MCF 10A (cell line): ENCODE measurements at regions of chr18 and their contacts with region 1.

Region 1: GRCh38 chr18:74342416-74343043 is 26.9 kb downstream of the C18orf63 start:
- DNase-seq: peak; percentile 60
- H3K4me3 Mint-ChIP-seq: no peak overlapping the region
- H3K27ac Mint-ChIP-seq: no peak overlapping the region
- H3K4me1 Mint-ChIP-seq: no peaks in the 10 kb centered on the region
- H3K27me3 Mint-ChIP-seq: peaks cover 41% of the 10 kb centered on the region
- CTCF ChIP-seq: peak; percentile 62

Region 2: GRCh38 chr18:72700961-72701718 is 1641.4 kb before region 1 on chr18:
- CTCF ChIA-PET with region 1: interaction called, 5 read pairs
- POLR2A ChIA-PET with region 1: no interaction called
- intact Hi-C with region 1: loop called (anchors 2 kb)
- DNase-seq: peak; percentile 40
- H3K4me3 Mint-ChIP-seq: no peak overlapping the region
- H3K27ac Mint-ChIP-seq: no peak overlapping the region
- H3K4me1 Mint-ChIP-seq: no peaks in the 10 kb centered on the region
- H3K27me3 Mint-ChIP-seq: no peaks in the 10 kb centered on the region
- CTCF ChIP-seq: peak; percentile 61

Region 3: GRCh38 chr18:74216631-74217110 is 125.9 kb before region 1 on chr18:
- CTCF ChIA-PET with region 1: interaction called, 11 read pairs
- POLR2A ChIA-PET with region 1: no interaction called
- intact Hi-C with region 1: no loop called
- DNase-seq: no peak
- H3K4me3 Mint-ChIP-seq: no peak overlapping the region
- H3K27ac Mint-ChIP-seq: no peak overlapping the region
- H3K4me1 Mint-ChIP-seq: peaks cover 5% of the 10 kb centered on the region
- H3K27me3 Mint-ChIP-seq: no peaks in the 10 kb centered on the region
- CTCF ChIP-seq: no peak

Region 4: DNA sequence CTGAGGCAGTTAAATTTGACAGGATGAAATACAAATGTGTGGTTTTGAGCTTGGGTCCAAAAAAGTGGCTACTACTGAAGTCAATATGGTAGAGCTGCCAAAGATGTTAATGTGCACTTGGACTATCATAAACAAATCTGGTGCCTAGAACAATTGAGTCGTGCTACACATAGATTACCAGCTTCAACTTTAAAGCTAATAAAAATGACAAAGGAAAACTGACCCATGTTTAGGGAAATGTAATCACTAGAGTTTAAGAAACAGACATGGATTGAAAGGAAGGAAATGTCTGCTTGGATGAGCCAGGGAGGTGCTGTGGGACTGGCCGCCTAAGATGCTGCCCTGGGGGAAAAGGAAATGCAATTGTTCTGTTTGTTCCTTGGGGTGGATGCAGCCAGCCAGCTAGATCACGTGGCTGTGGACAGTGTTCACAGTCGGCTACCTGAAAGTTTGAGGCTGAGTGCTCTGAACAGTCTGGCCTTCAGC is 87.4 kb before region 1 on chr18:
- CTCF ChIA-PET with region 1: no interaction called
- POLR2A ChIA-PET with region 1: no interaction called
- intact Hi-C with region 1: no loop called
- DNase-seq: peak; percentile 14
- H3K4me3 Mint-ChIP-seq: no peak overlapping the region
- H3K27ac Mint-ChIP-seq: no peak overlapping the region
- H3K4me1 Mint-ChIP-seq: peaks cover 15% of the 10 kb centered on the region
- H3K27me3 Mint-ChIP-seq: no peaks in the 10 kb centered on the region
- CTCF ChIP-seq: no peak

Region 5: DNA sequence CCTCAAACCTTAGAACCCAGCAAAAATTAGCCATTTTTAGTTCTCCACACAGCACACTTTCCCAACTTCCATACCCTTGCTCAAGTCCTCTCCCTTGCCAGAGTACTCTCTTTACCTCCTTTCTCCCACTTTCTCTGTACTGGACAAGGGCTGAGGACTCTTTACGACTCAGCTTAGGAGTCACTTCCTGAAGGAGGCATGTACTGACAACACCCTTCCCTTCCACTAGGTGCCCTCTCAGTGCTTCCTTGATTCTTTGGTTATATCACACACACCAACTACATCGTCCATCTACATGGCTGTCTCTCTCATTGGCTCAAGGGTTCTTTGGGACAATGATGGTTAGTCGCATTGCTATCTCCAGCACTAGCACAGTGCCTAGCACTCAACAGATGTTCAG is 32.1 kb before region 1 on chr18:
- CTCF ChIA-PET with region 1: interaction called, 20 read pairs
- POLR2A ChIA-PET with region 1: no interaction called
- intact Hi-C with region 1: loop called (anchors 2 kb)
- DNase-seq: peak; percentile 76
- H3K4me3 Mint-ChIP-seq: no peak overlapping the region
- H3K27ac Mint-ChIP-seq: peak overlapping the region; percentile 4
- H3K4me1 Mint-ChIP-seq: peaks cover 6% of the 10 kb centered on the region
- H3K27me3 Mint-ChIP-seq: no peaks in the 10 kb centered on the region
- CTCF ChIP-seq: peak; percentile 35

Region 6: DNA sequence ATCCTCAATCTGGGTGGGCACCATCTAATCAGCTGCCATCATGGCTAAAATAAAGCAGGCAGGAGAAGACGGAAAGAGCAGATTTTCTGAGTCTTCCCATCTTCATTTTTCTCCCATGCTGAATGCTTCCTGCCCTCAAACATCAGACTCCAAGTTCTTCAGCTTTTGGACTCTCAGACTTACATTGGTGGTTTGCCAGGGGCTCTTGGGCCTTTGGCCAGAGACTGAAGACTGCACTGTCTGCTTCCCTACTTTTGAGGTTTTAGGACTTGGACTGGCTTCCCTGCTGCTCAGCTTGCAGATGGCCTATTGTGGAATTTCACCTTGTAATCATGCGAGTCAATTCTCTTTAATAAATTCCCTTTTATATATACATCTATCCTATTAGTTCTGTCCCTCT is 78.0 kb after region 1 on chr18:
- CTCF ChIA-PET with region 1: no interaction called
- POLR2A ChIA-PET with region 1: no interaction called
- intact Hi-C with region 1: no loop called
- DNase-seq: no peak
- H3K4me3 Mint-ChIP-seq: no peak overlapping the region
- H3K27ac Mint-ChIP-seq: no peak overlapping the region
- H3K4me1 Mint-ChIP-seq: no peaks in the 10 kb centered on the region
- H3K27me3 Mint-ChIP-seq: peaks cover 62% of the 10 kb centered on the region
- CTCF ChIP-seq: no peak